PC-3 (cell line): ENCODE measurements at regions of chr17 and their contacts with region 1.

Region 1: GRCh38 chr17:29180034-29180787 is at the start of gene MYO18A:
- DNase-seq: peak; percentile 76
- ATAC-seq: peak; percentile 74
- H3K4me3 ChIP-seq: peak within 1 kb of the TSS; percentile 72
- H3K27ac ChIP-seq: peak within 1 kb of the TSS; percentile 81
- H3K4me1 ChIP-seq: peaks cover 44% of the 10 kb centered on the region
- H3K27me3 ChIP-seq: no peaks in the 10 kb centered on the region
- CTCF ChIP-seq: peak; percentile 60
- total RNA-seq, gene MYO18A: 28.0 and 36.1 TPM in 2 replicates

Region 2: GRCh38 chr17:29124117-29124924 is 55.9 kb before region 1 on chr17:
- CTCF ChIA-PET with region 1: interaction called, 18 read pairs
- POLR2A ChIA-PET with region 1: no interaction called
- intact Hi-C with region 1: no loop called
- DNase-seq: peak; percentile 72
- ATAC-seq: peak; percentile 92
- H3K4me3 ChIP-seq: no peak overlapping the region
- H3K27ac ChIP-seq: no peak overlapping the region
- H3K4me1 ChIP-seq: peaks cover 14% of the 10 kb centered on the region
- H3K27me3 ChIP-seq: no peaks in the 10 kb centered on the region
- CTCF ChIP-seq: peak; percentile 67

Region 3: GRCh38 chr17:29155227-29155965 is 24.8 kb before region 1 on chr17:
- CTCF ChIA-PET with region 1: interaction called, 13 read pairs
- POLR2A ChIA-PET with region 1: interaction called, 4 read pairs
- intact Hi-C with region 1: loop called (anchors 1 kb)
- DNase-seq: peak; percentile 74
- ATAC-seq: peak; percentile 79
- H3K4me3 ChIP-seq: no peak overlapping the region
- H3K27ac ChIP-seq: peak overlapping the region; percentile 86
- H3K4me1 ChIP-seq: peaks cover 60% of the 10 kb centered on the region
- H3K27me3 ChIP-seq: no peaks in the 10 kb centered on the region
- CTCF ChIP-seq: no peak

Region 4: DNA sequence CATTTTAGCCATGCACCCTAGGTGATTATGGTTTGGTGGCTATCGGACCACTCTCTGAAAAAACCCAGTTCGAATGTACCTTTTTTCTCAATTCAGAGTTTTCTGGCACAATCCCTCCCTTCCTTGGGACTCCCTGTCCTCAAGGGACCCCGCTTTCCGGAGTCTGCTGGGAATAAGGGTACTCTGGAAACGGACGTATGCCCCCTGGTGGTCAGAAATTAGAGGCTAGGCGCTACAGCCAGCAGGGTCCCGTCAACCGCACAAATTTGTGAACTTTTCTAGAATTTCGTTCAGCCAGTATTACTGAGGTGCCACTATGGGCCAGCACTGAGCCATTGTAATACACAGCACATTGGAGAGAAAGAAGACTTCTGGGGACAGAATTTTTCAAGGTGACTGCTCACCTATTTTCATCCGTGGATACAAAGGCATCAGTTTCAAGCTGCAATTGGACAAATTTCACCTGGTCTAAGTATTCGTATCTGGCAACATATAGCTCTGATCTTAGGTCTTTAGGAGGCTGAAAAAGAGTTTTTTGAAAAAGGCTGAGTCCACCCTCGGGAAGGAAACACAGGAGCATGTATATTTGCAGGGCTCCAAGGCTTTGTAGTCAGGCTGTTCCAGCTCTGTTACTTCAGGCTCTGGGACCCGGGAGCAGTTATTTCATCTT is 39.3 kb after region 1 on chr17:
- CTCF ChIA-PET with region 1: no interaction called
- POLR2A ChIA-PET with region 1: interaction called, 5 read pairs
- intact Hi-C with region 1: loop called (anchors 5 kb)
- DNase-seq: peak; percentile 82
- ATAC-seq: peak; percentile 99
- H3K4me3 ChIP-seq: no peak overlapping the region; the same call in 1 of the 2 replicates
- H3K27ac ChIP-seq: no peak overlapping the region
- H3K4me1 ChIP-seq: no peaks in the 10 kb centered on the region
- H3K27me3 ChIP-seq: no peaks in the 10 kb centered on the region
- CTCF ChIP-seq: peak; percentile 92